ENCODE measurements at regions of chr19 and their contacts with region 1.

Region 1: GRCh38 chr19:40523322-40524047 is 53.2 kb upstream of the SHKBP1 start:
- DNase-seq: peak; percentile 69
- H3K4me3 Mint-ChIP-seq: no peak overlapping the region
- H3K27ac Mint-ChIP-seq: no peak overlapping the region
- H3K4me1 Mint-ChIP-seq: peaks cover 3% of the 10 kb centered on the region
- H3K27me3 Mint-ChIP-seq: peaks cover 65% of the 10 kb centered on the region

Region 2: DNA sequence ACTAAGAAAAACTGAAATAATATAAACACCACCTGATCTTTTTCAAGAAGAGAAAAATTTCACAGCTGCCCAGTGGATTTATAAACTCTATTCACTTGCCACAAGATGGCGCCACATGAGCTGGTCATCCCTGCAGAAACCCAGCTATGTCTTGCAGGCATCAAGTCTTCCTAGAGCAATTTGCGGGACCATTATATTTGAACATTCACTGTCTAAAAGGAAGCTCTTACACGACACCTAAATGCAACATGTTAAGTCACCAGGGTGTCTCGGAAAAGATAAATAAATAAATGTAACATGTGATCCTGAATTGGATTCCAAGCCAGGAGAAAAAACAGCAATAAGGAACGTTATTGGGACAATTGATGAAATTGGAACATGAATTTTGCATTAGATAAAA is 218.1 kb before region 1 on chr19:
- CTCF ChIA-PET with region 1: interaction called, 10 read pairs
- DNase-seq: peak; percentile 88
- H3K4me3 Mint-ChIP-seq: no peak overlapping the region
- H3K27ac Mint-ChIP-seq: no peak overlapping the region
- H3K4me1 Mint-ChIP-seq: no peaks in the 10 kb centered on the region
- H3K27me3 Mint-ChIP-seq: no peaks in the 10 kb centered on the region

Region 3: GRCh38 chr19:40533508-40533907 is 10.0 kb after region 1 on chr19:
- CTCF ChIA-PET with region 1: interaction called, 15 read pairs
- DNase-seq: no peak
- H3K4me3 Mint-ChIP-seq: no peak overlapping the region
- H3K27ac Mint-ChIP-seq: no peak overlapping the region
- H3K4me1 Mint-ChIP-seq: peaks cover 14% of the 10 kb centered on the region
- H3K27me3 Mint-ChIP-seq: peaks cover 67% of the 10 kb centered on the region

Region 4: GRCh38 chr19:40549007-40549708 is 25.7 kb after region 1 on chr19:
- CTCF ChIA-PET with region 1: no interaction called
- DNase-seq: peak; percentile 82
- H3K4me3 Mint-ChIP-seq: no peak overlapping the region
- H3K27ac Mint-ChIP-seq: no peak overlapping the region
- H3K4me1 Mint-ChIP-seq: peaks cover 8% of the 10 kb centered on the region
- H3K27me3 Mint-ChIP-seq: peaks cover 67% of the 10 kb centered on the region

Region 5: DNA sequence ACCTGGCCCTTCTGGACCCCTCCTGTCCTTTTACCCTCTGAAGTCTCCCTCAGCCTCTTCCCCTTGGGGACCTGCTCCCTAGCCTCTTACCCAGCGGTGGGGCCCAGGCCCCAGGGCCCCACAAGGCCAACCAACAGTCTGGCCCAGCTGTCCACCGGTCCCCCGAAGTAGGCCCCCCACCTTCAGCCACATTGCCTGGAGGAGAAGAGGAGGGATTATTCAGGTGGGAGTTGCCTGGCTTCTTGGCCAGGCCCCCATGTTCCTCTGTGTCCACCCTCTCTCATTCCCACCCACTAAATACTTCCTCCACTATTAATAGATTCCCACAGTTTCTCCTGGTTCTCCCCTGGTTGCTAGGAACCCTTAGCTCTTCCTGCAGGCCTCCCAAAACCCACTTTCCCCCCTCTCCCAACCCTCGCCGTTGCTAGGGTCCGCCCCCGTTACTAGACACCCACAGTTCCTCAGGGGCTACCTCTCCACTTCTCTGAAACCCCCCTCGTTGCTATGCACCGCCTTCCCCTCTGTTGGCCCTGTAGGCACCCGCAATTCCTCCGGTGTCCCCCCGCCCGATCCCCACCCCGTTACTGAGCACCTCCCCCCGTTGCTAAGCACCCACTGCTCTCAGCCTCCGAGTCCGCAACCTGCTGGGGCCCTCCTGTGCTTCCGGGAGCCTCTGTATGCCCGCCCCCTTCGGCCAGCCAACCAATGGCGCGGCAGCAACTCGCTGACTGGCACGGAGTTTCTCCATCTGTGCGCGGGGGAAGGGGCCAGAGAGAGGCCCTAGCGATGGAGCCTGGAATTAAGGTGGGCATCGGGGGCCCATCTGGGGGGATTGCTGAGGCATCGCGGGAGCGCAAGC is 191.2 kb after region 1 on chr19:
- CTCF ChIA-PET with region 1: no interaction called
- DNase-seq: peak; percentile 97
- H3K4me3 Mint-ChIP-seq: peak overlapping the region; percentile 93
- H3K27ac Mint-ChIP-seq: peak overlapping the region; percentile 93
- H3K4me1 Mint-ChIP-seq: peaks cover 65% of the 10 kb centered on the region
- H3K27me3 Mint-ChIP-seq: no peaks in the 10 kb centered on the region